Heart right ventricle (tissue), 16 donors: ENCODE measurements at regions of chr18 and their contacts with region 1.

Region 1: DNA sequence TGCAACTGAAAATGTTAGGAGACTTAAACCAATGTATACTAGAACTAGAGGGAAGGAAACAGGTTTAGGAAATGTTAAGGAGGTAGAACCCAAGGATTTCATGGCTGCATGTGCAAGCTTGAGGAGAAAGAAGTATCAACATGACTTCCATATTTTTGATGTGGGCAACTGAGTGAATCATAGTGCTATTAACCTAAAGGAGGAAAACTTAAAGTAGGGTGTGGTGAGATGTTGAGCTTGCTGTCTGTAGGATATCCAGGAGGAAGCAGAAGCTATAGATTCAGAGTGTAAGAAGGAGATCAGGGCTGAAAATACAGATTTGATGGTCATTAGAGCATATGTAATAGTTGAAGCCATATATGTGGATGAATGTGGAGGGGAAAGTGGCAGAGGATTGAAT is 31.5 kb downstream of the NDC80 start:
- DNase-seq: no peak
- ATAC-seq: no peak
- H3K4me3 ChIP-seq: no peak overlapping the region
- H3K27ac ChIP-seq: no peak overlapping the region
- H3K4me1 ChIP-seq: peaks cover 0 to 21% (median 0%) of the 10 kb centered on the region in 9 donors
- H3K27me3 ChIP-seq: no peaks in the 10 kb centered on the region
- CTCF ChIP-seq: no peak

Region 2: GRCh38 chr18:2655178-2655953 is 52.5 kb after region 1 on chr18 and contains the start of gene SMCHD1:
- intact Hi-C with region 1: loop called in 1 of 10 experiments (anchors 5 kb)
- DNase-seq: peak; percentile 86 to 90
- ATAC-seq: peak; percentile 89 to 94 (median 91)
- H3K4me3 ChIP-seq: peak within 1 kb of the TSS; percentile 65 to 94 (median 88)
- H3K27ac ChIP-seq: peak within 1 kb of the TSS; percentile 86 to 99 (median 96)
- H3K4me1 ChIP-seq: peaks cover 0 to 48% (median 36%) of the 10 kb centered on the region in 9 donors
- H3K27me3 ChIP-seq: no peaks in the 10 kb centered on the region
- CTCF ChIP-seq: no peak
- total RNA-seq, gene SMCHD1: 20.4 to 35.3 (median 33.4) TPM